ENCODE measurements at regions of chr2 and their contacts with region 1.

Region 1: GRCh38 chr2:30362468-30363081 is 84.5 kb upstream of the LCLAT1 start:
- DNase-seq: peak in 1 of 2 donors; percentile 88
- H3K4me3 ChIP-seq: no peak overlapping the region
- H3K27ac ChIP-seq: peak overlapping the region; percentile 81 to 86
- H3K4me1 ChIP-seq: peaks cover 18 to 45% of the 10 kb centered on the region in 2 donors
- H3K27me3 ChIP-seq: no peaks in the 10 kb centered on the region
- CTCF ChIP-seq: no peak

Region 2: DNA sequence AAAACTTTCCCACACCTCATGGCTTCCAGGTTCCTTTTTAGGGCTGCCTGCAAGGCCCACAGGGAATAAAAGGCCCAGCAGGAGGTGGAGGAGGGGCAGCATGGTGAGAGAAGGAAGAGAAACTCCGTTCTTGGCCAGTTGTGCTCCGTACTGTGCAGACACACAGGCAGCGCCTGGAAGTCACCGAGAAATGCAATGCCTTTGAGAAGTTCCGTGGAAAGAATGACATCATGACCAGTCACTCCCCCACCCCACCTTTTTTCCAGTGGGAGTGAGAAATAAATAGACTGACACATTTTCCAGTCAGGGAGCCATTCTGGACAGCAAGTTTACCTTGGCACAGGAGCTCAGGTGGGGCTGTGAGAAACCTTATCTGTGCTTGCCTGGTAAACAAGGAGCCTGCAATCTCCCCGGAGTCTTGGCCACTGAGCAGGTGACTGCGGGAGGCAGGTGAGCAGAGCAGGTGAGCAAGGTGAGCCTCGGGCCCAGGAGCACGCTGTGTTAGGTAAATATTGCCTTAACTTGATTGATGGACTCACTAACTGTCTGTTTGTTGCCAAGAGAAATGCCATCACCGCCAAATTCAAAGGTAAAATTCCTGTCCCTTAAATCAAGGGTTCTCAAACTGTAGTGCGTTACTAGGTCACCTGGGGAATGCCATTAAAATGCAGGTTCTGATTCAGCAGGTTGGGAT is 144.8 kb before region 1 on chr2:
- intact Hi-C with region 1: loop called (anchors 5 kb)
- DNase-seq: peak; percentile 57 to 90
- H3K4me3 ChIP-seq: peak overlapping the region in 1 of 2 donors; percentile 15
- H3K27ac ChIP-seq: peak overlapping the region; percentile 73 to 82
- H3K4me1 ChIP-seq: peaks cover 6 to 23% of the 10 kb centered on the region in 2 donors
- H3K27me3 ChIP-seq: no peaks in the 10 kb centered on the region
- CTCF ChIP-seq: no peak

Region 3: DNA sequence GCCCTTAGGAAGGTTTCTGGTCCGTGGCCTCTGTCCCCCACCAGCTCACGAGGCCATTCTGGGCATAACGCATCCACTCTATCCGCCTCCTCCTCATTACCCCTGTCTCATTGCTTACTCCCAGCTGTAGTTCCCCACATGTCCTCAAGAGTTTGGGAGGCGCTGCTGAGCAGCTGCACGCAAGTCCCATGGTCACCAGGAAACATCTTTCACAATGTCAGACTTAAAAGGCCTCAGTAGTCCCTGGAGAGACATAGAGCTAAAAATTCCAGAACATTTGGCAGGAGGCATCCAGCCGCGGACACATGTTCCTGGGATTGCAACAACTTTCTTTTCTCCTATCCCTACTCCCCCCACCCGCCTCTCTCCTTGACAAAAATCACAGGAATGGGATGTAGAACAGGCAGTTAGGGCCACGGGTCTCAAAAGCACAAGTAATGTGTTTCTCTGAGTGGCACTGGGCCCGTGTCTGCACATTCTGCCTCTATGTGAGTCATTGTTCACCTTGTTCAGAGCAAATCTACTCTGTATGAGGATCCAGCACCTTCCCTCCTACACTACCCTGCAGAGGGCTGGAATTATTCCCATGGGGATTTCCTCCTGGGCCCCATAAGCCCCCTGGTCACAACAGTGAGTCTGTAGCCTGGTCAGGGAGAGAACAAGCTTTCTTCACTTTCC is 123.1 kb before region 1 on chr2:
- intact Hi-C with region 1: loop called (anchors 5 kb)
- DNase-seq: peak in 1 of 2 donors; percentile 87
- H3K4me3 ChIP-seq: peak overlapping the region; percentile 1 to 27
- H3K27ac ChIP-seq: peak overlapping the region; percentile 75 to 82
- H3K4me1 ChIP-seq: peaks cover 9 to 69% of the 10 kb centered on the region in 2 donors
- H3K27me3 ChIP-seq: no peaks in the 10 kb centered on the region
- CTCF ChIP-seq: peak; percentile 85 to 97 (median 89)

Region 4: DNA sequence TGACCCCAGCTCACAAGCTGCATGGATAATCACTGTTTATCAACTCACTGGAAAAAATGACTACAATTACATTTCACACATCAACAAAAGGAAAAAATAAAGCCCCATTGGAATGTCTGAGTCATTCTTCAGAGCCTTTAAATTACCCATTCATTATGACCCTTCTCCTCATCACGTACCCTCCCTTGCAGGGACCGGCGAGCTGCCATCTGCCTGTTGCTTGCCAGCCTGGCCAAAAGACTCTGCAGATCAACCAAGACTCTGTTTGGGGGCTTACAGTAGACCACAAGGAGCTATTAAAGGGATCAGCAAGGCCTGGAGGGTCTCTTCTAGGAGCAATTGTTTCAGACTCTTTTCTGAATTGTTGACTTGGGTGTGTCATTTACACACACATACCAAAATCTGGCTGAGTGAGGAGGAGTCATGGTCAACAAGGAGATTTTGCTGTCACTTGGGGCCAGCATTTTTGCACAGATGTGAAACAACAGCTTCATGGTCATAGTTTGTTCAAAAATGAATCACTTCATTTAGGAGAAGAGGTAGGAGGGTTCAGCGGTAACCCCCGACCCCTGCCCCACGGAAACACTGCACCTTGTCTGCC is 89.2 kb before region 1 on chr2:
- intact Hi-C with region 1: loop called (anchors 5 kb)
- DNase-seq: no peak
- H3K4me3 ChIP-seq: no peak overlapping the region
- H3K27ac ChIP-seq: peak overlapping the region; percentile 53 to 70
- H3K4me1 ChIP-seq: peaks cover 5 to 28% of the 10 kb centered on the region in 2 donors
- H3K27me3 ChIP-seq: no peaks in the 10 kb centered on the region
- CTCF ChIP-seq: no peak

Region 5: GRCh38 chr2:30421604-30422443 is 59.2 kb after region 1 on chr2:
- intact Hi-C with region 1: no loop called
- DNase-seq: no peak
- H3K4me3 ChIP-seq: peak overlapping the region in 1 of 2 donors; percentile 43
- H3K27ac ChIP-seq: peak overlapping the region; percentile 77 to 79
- H3K4me1 ChIP-seq: peaks cover 10 to 23% of the 10 kb centered on the region in 2 donors
- H3K27me3 ChIP-seq: no peaks in the 10 kb centered on the region
- CTCF ChIP-seq: no peak

Region 6: DNA sequence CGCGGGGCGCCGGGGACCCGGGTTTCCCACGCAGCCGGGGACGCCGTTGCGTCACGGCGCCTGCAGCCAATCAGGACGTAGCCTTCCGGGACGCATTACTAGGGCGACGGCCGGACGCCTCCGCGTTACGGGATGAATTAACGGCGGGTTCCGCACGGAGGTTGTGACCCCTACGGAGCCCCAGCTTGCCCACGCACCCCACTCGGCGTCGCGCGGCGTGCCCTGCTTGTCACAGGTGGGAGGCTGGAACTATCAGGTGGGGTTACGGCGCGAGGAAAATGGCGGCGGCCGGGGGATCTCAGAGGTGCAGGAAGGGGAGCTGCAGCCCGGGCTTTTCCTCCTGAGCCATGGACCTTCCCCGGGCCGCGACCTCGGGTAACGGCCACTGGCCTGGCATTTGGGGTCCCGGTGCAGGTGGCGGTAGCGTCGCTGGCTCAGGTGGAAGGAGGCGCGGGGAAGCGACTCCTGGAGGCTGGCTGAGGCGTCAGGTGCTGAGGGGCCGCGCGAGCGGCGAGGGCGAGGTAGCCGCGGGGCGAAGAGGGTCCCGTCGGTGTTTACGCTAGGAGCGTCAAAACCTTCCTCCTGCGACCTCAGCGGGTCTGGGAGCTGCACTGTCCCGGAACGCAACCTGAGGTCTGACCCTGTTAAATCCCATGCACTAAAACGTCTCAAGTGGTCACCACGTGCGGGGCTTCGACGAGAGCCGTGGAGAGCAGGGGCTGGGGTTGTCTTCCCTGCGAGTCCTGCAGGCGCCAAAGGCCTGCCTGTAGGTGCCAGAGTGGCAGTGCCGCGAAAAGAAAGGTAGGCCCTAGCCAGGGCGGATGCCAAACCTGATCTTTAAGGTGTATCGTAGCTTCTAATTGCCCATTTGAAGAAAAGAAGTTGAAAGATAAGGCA is 84.8 kb after region 1 on chr2 and contains the start of gene LCLAT1:
- intact Hi-C with region 1: loop called (anchors 5 kb)
- DNase-seq: peak; percentile 22 to 88
- H3K4me3 ChIP-seq: peak within 1 kb of the TSS; percentile 82 to 87
- H3K27ac ChIP-seq: peak within 1 kb of the TSS; percentile 66 to 70
- H3K4me1 ChIP-seq: peaks cover 4 to 5% of the 10 kb centered on the region in 2 donors
- H3K27me3 ChIP-seq: no peaks in the 10 kb centered on the region
- CTCF ChIP-seq: peak in 1 of 3 experiments; percentile 13
- total RNA-seq, gene LCLAT1: 9.8 TPM

Measured in ascending aorta (tissue), 2 donors.